ENCODE measurements at regions of chr6 and their contacts with region 1.

Region 1: GRCh38 chr6:41591859-41592502 is 45.8 kb downstream of the FOXP4 start:
- DNase-seq: peak; percentile 80 to 92 (median 91)
- ATAC-seq: peak; percentile 93
- H3K4me3 ChIP-seq: no peak overlapping the region
- H3K27ac ChIP-seq: no peak overlapping the region
- H3K4me1 ChIP-seq: peaks cover 0 to 7% of the 10 kb centered on the region in 2 experiments; a peak in 1 of 5 replicates
- H3K27me3 ChIP-seq: no peaks in the 10 kb centered on the region
- CTCF ChIP-seq: peak; percentile 93 to 98 (median 97)
- EP300 ChIP-seq: no peak
- POLR2A ChIP-seq: no peak
- RAD21 ChIP-seq: peak; percentile 89 to 96

Region 2: DNA sequence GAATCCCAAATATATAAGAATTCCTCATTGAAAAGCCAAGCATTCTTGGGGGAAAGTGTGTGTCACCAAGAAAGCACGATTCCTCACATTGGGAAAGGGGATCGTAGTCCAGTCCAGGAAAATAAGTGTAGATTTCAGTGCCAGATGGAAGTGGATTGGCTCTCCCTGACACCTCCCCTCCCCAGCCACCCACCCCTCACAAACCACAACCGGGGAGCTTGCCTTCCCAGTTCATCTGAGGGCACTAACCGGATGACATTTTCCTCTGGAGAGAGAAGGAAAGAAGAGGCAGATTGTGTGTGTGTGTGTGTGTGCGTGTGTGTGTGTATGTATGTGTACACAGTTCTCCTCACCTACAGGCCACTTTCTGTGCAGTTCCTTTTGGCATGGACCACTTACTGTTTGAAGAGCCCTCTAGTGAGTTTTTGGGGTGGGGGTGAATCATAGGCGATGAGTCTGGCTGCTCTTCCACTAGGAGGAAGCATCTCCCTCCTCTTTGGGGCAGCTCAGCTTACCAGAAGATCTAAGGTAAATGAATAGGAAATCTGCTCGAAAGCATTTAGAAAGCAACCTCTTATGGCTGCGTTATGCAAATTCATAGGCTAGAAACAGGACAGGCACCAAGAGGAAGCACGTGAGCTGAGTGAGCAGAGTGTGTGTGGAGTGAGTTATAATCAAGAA is 1779.0 kb before region 1 on chr6:
- CTCF ChIA-PET with region 1: no interaction called
- POLR2A ChIA-PET with region 1: no interaction called
- in situ Hi-C with region 1: no loop called
- intact Hi-C with region 1: no loop called
- DNase-seq: no peak
- ATAC-seq: no peak; the same call in 2 of the 3 replicates
- H3K4me3 ChIP-seq: no peak overlapping the region
- H3K27ac ChIP-seq: no peak overlapping the region
- H3K4me1 ChIP-seq: no peaks in the 10 kb centered on the region
- H3K27me3 ChIP-seq: peaks cover 6 to 8% of the 10 kb centered on the region in 2 experiments; a peak in 2 of 5 replicates
- CTCF ChIP-seq: 0 out of 6 replicates have a peak, but pooled peaks of 1 of the 3 experiments have one; percentile 6
- EP300 ChIP-seq: no peak
- POLR2A ChIP-seq: no peak
- RAD21 ChIP-seq: no peak; a peak in 1 of 4 replicates

Region 3: DNA sequence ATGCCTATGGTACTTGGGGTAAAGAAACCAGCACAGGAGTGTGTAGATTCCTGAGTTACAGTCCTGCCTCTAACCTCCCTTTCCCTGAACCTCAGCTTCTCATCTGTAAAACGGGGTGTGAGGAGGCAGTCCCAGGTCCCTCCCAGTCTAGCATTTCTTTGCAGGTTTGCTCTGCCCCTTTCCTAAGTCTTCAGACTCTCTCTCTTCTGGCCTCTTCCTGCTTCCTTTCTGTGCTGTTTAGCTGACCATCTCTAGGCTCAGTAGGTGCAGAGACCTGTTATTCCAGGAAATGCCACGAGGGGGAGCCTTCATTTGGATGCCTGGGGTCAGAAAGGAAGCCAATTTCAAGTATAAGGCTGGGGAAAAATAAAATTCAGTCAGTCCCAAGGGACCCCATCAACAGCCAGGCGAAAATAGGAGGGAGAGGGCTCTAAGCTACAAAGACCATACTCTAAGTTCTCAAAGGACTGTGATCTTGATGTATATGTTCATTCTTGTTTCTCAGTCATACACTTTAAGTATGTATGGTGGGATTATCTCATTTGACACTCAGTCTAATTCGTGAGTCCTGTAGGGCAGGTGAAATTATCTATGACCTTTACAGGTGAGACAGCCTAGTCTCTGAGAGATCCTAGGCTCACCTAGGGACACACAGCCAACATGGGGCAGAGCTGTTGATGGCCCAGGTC is 167.5 kb before region 1 on chr6:
- CTCF ChIA-PET with region 1: interaction called, 24 read pairs
- POLR2A ChIA-PET with region 1: no interaction called
- in situ Hi-C with region 1: no loop called
- intact Hi-C with region 1: loop called (anchors 1 kb)
- DNase-seq: peak; percentile 78 to 86 (median 82)
- ATAC-seq: peak; percentile 92
- H3K4me3 ChIP-seq: no peak overlapping the region
- H3K27ac ChIP-seq: no peak overlapping the region
- H3K4me1 ChIP-seq: peaks cover 0 to 10% of the 10 kb centered on the region in 2 experiments; a peak in 2 of 5 replicates
- H3K27me3 ChIP-seq: peaks cover 23 to 58% of the 10 kb centered on the region in 2 experiments
- CTCF ChIP-seq: peak; percentile 84 to 94 (median 87)
- EP300 ChIP-seq: no peak
- POLR2A ChIP-seq: no peak
- RAD21 ChIP-seq: peak; percentile 73 to 76

Region 4: GRCh38 chr6:41463062-41463930 is 128.7 kb before region 1 on chr6:
- CTCF ChIA-PET with region 1: interaction called, 31 read pairs
- POLR2A ChIA-PET with region 1: no interaction called
- in situ Hi-C with region 1: loop called (anchors 5 kb)
- intact Hi-C with region 1: loop called (anchors 1 kb)
- DNase-seq: peak; percentile 78 to 89 (median 82)
- ATAC-seq: peak; percentile 98
- H3K4me3 ChIP-seq: no peak overlapping the region
- H3K27ac ChIP-seq: no peak overlapping the region
- H3K4me1 ChIP-seq: no peaks in the 10 kb centered on the region
- H3K27me3 ChIP-seq: peaks cover 13 to 40% of the 10 kb centered on the region in 2 experiments; a peak in 4 of 5 replicates
- CTCF ChIP-seq: peak; percentile 81 to 97 (median 90)
- EP300 ChIP-seq: no peak
- POLR2A ChIP-seq: no peak
- RAD21 ChIP-seq: peak; percentile 82 to 95

Region 5: DNA sequence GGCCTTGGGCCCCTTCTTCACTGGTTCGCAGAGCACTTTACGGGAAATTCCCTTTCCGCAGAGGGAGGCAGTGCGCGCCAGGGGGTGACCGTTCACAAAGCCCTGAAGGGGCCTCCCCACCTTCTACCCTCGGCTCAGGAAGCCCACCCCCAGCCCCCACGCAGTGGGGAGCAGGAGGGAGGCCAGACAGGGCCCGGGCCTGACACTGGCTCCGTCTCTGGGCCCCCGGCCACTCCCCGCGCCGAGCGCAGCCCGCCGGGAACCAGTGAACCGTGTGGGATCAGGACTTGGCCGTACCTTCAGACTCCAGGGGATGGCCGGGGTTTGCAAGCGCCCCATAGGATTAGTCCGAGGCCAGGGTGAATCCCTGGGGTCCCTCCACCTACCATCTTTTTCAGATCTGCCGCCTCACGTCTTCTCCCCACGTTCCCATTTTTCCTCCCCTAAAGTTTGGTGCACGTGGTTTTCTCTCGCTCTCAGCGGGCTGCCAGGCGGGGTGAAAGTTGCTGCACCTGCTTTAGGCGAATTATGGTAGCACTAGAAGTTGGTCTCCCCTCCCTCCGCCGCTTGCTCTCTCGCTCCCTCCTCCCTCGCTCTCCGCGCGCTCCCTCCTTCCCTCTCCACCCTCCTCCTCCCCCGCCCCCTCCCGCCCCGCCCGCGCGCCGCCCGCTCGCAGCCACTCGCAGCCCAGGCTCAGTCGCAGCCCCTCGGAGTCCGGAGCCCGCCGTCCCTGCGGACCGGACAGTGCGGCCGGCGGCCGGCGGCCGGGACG is 46.1 kb before region 1 on chr6 and contains the start of gene FOXP4:
- CTCF ChIA-PET with region 1: interaction called, 3 read pairs
- POLR2A ChIA-PET with region 1: interaction called, 6 read pairs
- in situ Hi-C with region 1: no loop called
- intact Hi-C with region 1: loop called (anchors 2 kb)
- DNase-seq: peak; percentile 87 to 97 (median 92)
- ATAC-seq: peak; percentile 86
- H3K4me3 ChIP-seq: peak within 1 kb of the TSS; percentile 68
- H3K27ac ChIP-seq: peak within 1 kb of the TSS; percentile 77
- H3K4me1 ChIP-seq: peaks cover 28 to 36% of the 10 kb centered on the region in 2 experiments
- H3K27me3 ChIP-seq: no peaks in the 10 kb centered on the region
- CTCF ChIP-seq: peak in 1 of 3 experiments; percentile 15; a peak in 1 of 6 replicates
- EP300 ChIP-seq: no peak
- POLR2A ChIP-seq: peak; percentile 70; the same call in 1 of the 2 replicates
- RAD21 ChIP-seq: no peak; a peak in 2 of 4 replicates
- polyA plus RNA-seq, gene FOXP4: 0.11 TPM

Region 6: GRCh38 chr6:41644297-41644879 is 52.4 kb after region 1 on chr6:
- CTCF ChIA-PET with region 1: no interaction called
- POLR2A ChIA-PET with region 1: no interaction called
- in situ Hi-C with region 1: no loop called
- intact Hi-C with region 1: no loop called
- DNase-seq: no peak
- ATAC-seq: no peak
- H3K4me3 ChIP-seq: no peak overlapping the region
- H3K27ac ChIP-seq: no peak overlapping the region
- H3K4me1 ChIP-seq: no peaks in the 10 kb centered on the region
- H3K27me3 ChIP-seq: peaks cover 49 to 85% of the 10 kb centered on the region in 2 experiments; a peak in 4 of 5 replicates
- CTCF ChIP-seq: no peak
- EP300 ChIP-seq: no peak
- POLR2A ChIP-seq: no peak
- RAD21 ChIP-seq: no peak